Ascending aorta (tissue), 2 donors: ENCODE measurements at regions of chr11 and their contacts with region 1.

Region 1: GRCh38 chr11:115623021-115623451 is 118.8 kb upstream of the CADM1 start:
- DNase-seq: peak; percentile 56 to 87
- H3K4me3 ChIP-seq: no peak overlapping the region
- H3K27ac ChIP-seq: peak overlapping the region; percentile 55 to 66
- H3K4me1 ChIP-seq: peaks cover 0 to 13% of the 10 kb centered on the region in 2 donors
- H3K27me3 ChIP-seq: no peaks in the 10 kb centered on the region
- CTCF ChIP-seq: no peak

Region 2: GRCh38 chr11:115659061-115659963 is 36.3 kb after region 1 on chr11:
- intact Hi-C with region 1: no loop called
- DNase-seq: no peak
- H3K4me3 ChIP-seq: peak overlapping the region; percentile 36 to 60
- H3K27ac ChIP-seq: no peak overlapping the region
- H3K4me1 ChIP-seq: peaks cover 0 to 8% of the 10 kb centered on the region in 2 donors
- H3K27me3 ChIP-seq: peaks cover 5% of the 10 kb centered on the region
- CTCF ChIP-seq: no peak

Region 3: DNA sequence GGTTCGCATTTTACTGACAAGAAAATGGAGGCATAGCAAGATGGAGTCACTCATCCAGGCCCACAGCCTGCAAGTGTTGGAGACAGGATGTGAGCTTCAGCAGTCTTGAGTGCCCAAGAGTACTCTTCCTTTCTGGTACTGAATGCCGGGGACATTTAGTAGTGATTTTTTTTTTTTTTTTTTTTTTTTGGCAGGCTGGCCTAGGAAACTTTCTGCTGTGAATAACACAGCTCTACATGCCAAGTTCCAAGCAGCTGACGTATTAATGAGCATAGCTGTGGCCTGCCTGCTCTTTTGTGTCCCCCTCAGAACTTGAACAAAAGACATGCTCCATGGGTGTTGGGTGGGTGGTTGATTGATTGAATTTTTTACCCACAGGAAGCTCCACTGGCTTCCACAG is 76.7 kb after region 1 on chr11:
- intact Hi-C with region 1: loop called (anchors 5 kb)
- DNase-seq: no peak
- H3K4me3 ChIP-seq: no peak overlapping the region
- H3K27ac ChIP-seq: peak overlapping the region; percentile 60 to 65
- H3K4me1 ChIP-seq: peaks cover 3 to 14% of the 10 kb centered on the region in 2 donors
- H3K27me3 ChIP-seq: no peaks in the 10 kb centered on the region
- CTCF ChIP-seq: no peak